Heart right ventricle (tissue), 16 donors: ENCODE measurements at regions of chr5 and their contacts with region 1.

Region 1: DNA sequence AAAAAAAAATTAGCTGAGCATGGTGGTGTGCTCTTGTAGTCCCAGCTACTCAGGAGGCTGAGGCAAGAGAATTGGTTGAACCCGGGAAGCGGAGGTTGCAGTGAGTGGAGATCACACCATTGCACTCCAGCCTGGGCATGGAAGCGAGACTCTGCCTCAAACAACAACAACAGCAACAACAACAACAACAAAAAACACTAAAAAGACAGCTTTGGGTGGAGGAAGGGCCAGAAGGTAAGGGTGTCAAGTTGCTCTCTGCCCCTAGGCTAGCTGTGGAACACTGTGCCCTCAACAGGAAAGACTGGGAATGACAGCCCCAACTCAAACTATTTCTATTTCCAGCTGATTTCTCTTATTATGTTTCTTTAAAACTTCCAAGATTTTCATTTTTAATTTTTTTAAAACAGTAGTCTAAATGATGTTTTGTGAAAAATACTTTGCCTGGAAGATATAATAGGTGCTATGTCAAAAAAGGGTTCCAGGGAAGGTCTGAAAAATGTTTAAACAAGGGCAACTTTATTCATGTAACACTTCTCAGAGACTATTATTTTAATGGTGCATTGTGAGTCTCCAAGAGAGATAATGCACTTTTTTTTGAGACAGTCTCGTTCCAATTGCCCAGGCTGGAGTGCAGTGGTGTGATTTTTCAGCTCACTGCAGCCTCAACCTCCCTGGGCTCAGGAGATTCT is 29.9 kb downstream of the CLINT1 start:
- DNase-seq: no peak
- ATAC-seq: no peak
- H3K4me3 ChIP-seq: no peak overlapping the region
- H3K27ac ChIP-seq: peak overlapping the region in 5 of 10 donors; percentile 1 to 71 (median 30)
- H3K4me1 ChIP-seq: peaks cover 2 to 71% (median 51%) of the 10 kb centered on the region in 9 donors
- H3K27me3 ChIP-seq: no peaks in the 10 kb centered on the region
- CTCF ChIP-seq: peak in 5 of 9 donors; percentile 9 to 39 (median 32)

Region 2: DNA sequence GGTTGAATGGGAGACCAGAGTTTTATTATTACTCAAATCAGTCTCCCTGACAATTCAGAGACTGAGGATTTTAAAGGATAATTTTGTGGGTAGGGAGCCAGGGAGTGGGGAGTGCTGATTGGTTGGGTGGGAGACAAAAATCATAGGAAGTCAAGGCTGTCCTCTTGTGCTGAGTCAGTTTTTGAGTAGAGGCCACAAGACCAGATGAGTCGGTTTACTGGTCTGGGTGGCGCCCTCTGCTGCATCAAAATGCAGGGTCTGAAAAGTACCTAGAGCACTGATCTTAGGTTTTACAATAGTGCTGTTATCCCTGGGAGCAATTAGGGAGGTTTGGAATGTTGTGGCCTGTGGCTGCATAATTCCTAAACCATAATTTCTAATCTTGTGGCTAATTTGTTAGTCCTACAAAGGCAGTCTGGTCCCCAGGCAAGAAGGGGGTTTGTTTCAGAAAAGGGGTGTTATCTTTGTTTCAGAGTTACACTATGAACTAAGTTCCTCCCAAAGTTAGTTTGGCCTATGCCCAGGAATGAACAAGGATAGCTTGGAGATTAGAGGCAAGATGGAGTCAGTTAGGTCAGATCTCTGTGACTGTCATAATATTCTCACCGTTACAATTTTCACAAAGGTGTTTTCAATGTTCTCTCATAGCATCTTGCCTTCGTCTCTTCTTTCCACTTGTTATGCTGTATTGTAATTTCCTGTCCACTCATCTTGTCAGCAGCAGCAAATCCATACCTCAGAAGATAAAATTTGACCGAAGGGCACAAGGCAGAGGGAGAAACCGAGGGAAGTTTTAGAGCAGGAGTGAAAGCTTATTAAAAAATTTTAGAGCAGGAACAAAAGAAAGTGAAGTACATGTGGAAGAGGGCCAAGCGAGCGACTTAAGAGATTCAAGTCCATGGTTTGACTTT is 89.1 kb after region 1 on chr5:
- intact Hi-C with region 1: loop called in 3 of 10 experiments (anchors 5 kb)
- DNase-seq: peak; percentile 42 to 57
- ATAC-seq: peak in 7 of 8 donors; percentile 27 to 61 (median 45)
- H3K4me3 ChIP-seq: no peak overlapping the region
- H3K27ac ChIP-seq: peak overlapping the region in 2 of 10 donors; percentile 10 to 36
- H3K4me1 ChIP-seq: peaks cover 5 to 58% (median 40%) of the 10 kb centered on the region in 9 donors
- H3K27me3 ChIP-seq: no peaks in the 10 kb centered on the region
- CTCF ChIP-seq: peak in 8 of 9 donors; percentile 8 to 67 (median 52)